ENCODE measurements at regions of chr1 and their contacts with region 1.

Region 1: DNA sequence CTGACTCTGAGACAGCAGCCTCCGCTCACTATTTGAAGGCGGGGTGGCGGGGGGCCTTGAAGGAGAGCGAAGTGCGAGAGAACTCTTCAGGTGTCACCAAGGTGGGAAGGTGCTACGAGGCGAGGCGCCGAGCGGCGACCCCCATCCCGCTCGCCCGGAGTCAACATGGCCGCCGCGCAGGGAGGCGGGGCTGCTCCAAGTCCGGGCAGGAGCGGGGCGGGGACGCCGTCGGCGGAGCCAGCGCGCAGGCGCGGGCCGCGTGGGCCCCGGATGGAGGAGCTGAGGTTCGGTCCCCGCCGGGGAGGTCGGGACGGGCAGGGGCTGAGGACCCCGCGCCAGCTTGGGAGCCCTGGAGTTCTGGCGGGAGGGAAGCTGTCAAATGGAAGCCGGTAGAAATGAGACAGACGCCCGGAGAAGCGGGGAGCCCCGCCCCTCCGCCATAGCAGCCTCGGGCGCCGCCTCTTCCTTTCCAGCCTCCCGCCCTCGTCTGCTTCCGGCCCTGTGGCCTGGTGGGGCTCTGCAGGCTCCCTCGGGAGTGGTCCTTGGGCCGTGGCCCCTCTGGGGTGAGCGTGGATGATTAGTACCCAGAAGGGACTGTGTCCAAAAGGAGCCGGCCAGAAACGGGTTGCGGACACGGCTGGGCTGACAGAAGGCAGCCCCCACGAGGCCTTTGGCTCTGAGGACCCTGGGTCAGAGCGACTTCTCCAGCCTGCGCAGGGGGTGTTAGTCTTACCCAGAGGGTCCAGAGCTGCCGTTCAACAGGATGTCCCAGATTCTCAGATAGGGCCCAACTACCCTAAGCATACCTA is at the start of gene PIGV:
- DNase-seq: peak; percentile 79
- H3K4me3 Mint-ChIP-seq: peak within 1 kb of the TSS; percentile 97
- H3K27ac Mint-ChIP-seq: peak within 1 kb of the TSS; percentile 100
- H3K4me1 Mint-ChIP-seq: peaks cover 44% of the 10 kb centered on the region
- H3K27me3 Mint-ChIP-seq: no peaks in the 10 kb centered on the region
- CTCF ChIP-seq: no peak
- total RNA-seq, gene PIGV: 13.3 and 14.7 TPM in 2 replicates

Region 2: GRCh38 chr1:26529655-26530409 is 258.1 kb before region 1 on chr1 and contains the start of gene RPS6KA1:
- CTCF ChIA-PET with region 1: no interaction called
- POLR2A ChIA-PET with region 1: interaction called, 13 read pairs
- intact Hi-C with region 1: no loop called
- DNase-seq: peak; percentile 56
- H3K4me3 Mint-ChIP-seq: peak within 1 kb of the TSS; percentile 89
- H3K27ac Mint-ChIP-seq: peak within 1 kb of the TSS; percentile 90
- H3K4me1 Mint-ChIP-seq: peaks cover 14% of the 10 kb centered on the region
- H3K27me3 Mint-ChIP-seq: no peaks in the 10 kb centered on the region
- CTCF ChIP-seq: no peak
- total RNA-seq, gene RPS6KA1: 43.9 and 50.9 TPM in 2 replicates

Region 3: GRCh38 chr1:26677306-26678115 is 110.4 kb before region 1 on chr1:
- CTCF ChIA-PET with region 1: interaction called, 63 read pairs
- POLR2A ChIA-PET with region 1: interaction called, 31 read pairs
- intact Hi-C with region 1: loop called (anchors 1 kb)
- DNase-seq: peak; percentile 97
- H3K4me3 Mint-ChIP-seq: no peak overlapping the region
- H3K27ac Mint-ChIP-seq: no peak overlapping the region
- H3K4me1 Mint-ChIP-seq: peaks cover 16% of the 10 kb centered on the region
- H3K27me3 Mint-ChIP-seq: no peaks in the 10 kb centered on the region
- CTCF ChIP-seq: peak; percentile 66

Region 4: GRCh38 chr1:26723013-26723991 is 64.6 kb before region 1 on chr1:
- CTCF ChIA-PET with region 1: interaction called, 23 read pairs
- POLR2A ChIA-PET with region 1: interaction called, 11 read pairs
- intact Hi-C with region 1: no loop called
- DNase-seq: peak; percentile 96
- H3K4me3 Mint-ChIP-seq: peak overlapping the region; percentile 28
- H3K27ac Mint-ChIP-seq: peak overlapping the region; percentile 78
- H3K4me1 Mint-ChIP-seq: peaks cover 48% of the 10 kb centered on the region
- H3K27me3 Mint-ChIP-seq: no peaks in the 10 kb centered on the region
- CTCF ChIP-seq: no peak

Region 5: GRCh38 chr1:26799479-26800142 is 11.7 kb after region 1 on chr1:
- CTCF ChIA-PET with region 1: interaction called, 37 read pairs
- POLR2A ChIA-PET with region 1: interaction called, 6 read pairs
- intact Hi-C with region 1: no loop called
- DNase-seq: peak; percentile 70
- H3K4me3 Mint-ChIP-seq: no peak overlapping the region
- H3K27ac Mint-ChIP-seq: no peak overlapping the region
- H3K4me1 Mint-ChIP-seq: peaks cover 11% of the 10 kb centered on the region
- H3K27me3 Mint-ChIP-seq: no peaks in the 10 kb centered on the region
- CTCF ChIP-seq: no peak

Measured in MCF 10A (cell line).